Mammary epithelial cell (primary cell): ENCODE measurements at regions of chr19 and their contacts with region 1.

Region 1: DNA sequence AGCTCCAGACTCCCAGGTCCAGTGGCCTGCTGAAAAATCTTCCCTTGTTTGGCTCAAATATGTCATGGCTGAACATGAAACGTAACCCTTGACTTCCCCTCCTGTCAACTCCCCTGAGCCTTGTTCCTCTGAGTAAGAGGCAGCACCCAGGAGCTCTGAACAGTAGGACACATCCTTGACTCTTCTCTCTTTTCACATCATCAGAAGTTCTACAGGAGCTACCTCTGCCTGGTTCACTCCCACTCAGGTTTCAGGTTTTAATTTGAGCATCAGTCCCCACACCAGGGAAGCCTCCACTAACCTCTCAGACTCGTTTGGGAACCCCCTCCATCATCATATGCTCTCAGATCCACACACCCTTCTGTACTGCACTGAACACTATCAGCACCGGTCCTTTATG is 30.3 kb downstream of the ZNF823 start:
- DNase-seq: no peak
- H3K4me3 ChIP-seq: no peak overlapping the region
- H3K27ac ChIP-seq: no peak overlapping the region
- H3K4me1 ChIP-seq: no peaks in the 10 kb centered on the region
- H3K27me3 ChIP-seq: no peaks in the 10 kb centered on the region
- CTCF ChIP-seq: no peak

Region 2: GRCh38 chr19:11649941-11650340 is 58.5 kb before region 1 on chr19:
- CTCF ChIA-PET with region 1: no interaction called
- dilution Hi-C with region 1: loop called (anchors 5 kb)
- in situ Hi-C with region 1: no loop called
- intact Hi-C with region 1: no loop called
- DNase-seq: no peak
- H3K4me3 ChIP-seq: no peak overlapping the region
- H3K27ac ChIP-seq: no peak overlapping the region
- H3K4me1 ChIP-seq: no peaks in the 10 kb centered on the region
- H3K27me3 ChIP-seq: no peaks in the 10 kb centered on the region
- CTCF ChIP-seq: no peak

Region 3: DNA sequence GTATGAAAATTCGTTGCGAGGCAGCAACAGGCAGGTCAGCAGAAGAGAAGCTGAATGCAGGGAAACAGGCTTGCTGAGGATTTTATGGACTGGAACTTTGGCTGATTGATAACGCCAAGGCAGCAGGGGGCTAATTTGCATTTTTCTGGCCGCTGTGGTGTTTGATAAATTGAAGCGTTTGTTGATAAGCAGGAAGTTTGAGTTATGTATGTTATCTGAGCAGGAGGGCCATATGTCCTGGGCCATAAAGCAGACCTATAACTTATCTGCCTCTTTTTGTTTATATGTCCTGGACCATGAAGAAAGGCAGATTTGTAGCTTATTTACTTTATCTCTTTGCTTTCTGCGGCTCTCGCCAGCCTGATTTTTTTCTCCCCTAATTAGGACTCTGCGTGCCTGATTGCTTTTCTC is 45.3 kb before region 1 on chr19:
- CTCF ChIA-PET with region 1: no interaction called
- dilution Hi-C with region 1: no loop called
- in situ Hi-C with region 1: no loop called
- intact Hi-C with region 1: no loop called
- DNase-seq: no peak
- H3K4me3 ChIP-seq: no peak overlapping the region
- H3K27ac ChIP-seq: no peak overlapping the region
- H3K4me1 ChIP-seq: no peaks in the 10 kb centered on the region
- H3K27me3 ChIP-seq: no peaks in the 10 kb centered on the region
- CTCF ChIP-seq: no peak